Heart left ventricle (tissue), 16 donors: ENCODE measurements at regions of chr7 and their contacts with region 1.

Region 1: GRCh38 chr7:83936056-83936708 is 258.4 kb downstream of the SEMA3A start:
- DNase-seq: peak; percentile 22 to 55 (median 39)
- ATAC-seq: peak in 2 of 4 donors; percentile 57 to 70
- H3K4me3 ChIP-seq: no peak overlapping the region
- H3K27ac ChIP-seq: peak overlapping the region in 1 of 12 donors; percentile 2
- H3K4me1 ChIP-seq: peaks cover 0 to 4% (median 0%) of the 10 kb centered on the region in 12 donors
- H3K27me3 ChIP-seq: no peaks in the 10 kb centered on the region
- CTCF ChIP-seq: peak; percentile 72 to 88 (median 79)
- POLR2A ChIP-seq: no peak

Region 2: GRCh38 chr7:83755526-83755925 is 180.7 kb before region 1 on chr7:
- intact Hi-C with region 1: no loop called
- DNase-seq: no peak
- ATAC-seq: no peak
- H3K4me3 ChIP-seq: no peak overlapping the region
- H3K27ac ChIP-seq: no peak overlapping the region
- H3K4me1 ChIP-seq: no peaks in the 10 kb centered on the region
- H3K27me3 ChIP-seq: no peaks in the 10 kb centered on the region
- CTCF ChIP-seq: no peak
- POLR2A ChIP-seq: no peak

Region 3: GRCh38 chr7:85014936-85015660 is 1078.9 kb after region 1 on chr7:
- intact Hi-C with region 1: loop called in 2 of 10 experiments (anchors 5 kb)
- DNase-seq: no peak
- ATAC-seq: no peak
- H3K4me3 ChIP-seq: no peak overlapping the region
- H3K27ac ChIP-seq: no peak overlapping the region
- H3K4me1 ChIP-seq: no peaks in the 10 kb centered on the region
- H3K27me3 ChIP-seq: no peaks in the 10 kb centered on the region
- CTCF ChIP-seq: no peak
- POLR2A ChIP-seq: no peak

Region 4: DNA sequence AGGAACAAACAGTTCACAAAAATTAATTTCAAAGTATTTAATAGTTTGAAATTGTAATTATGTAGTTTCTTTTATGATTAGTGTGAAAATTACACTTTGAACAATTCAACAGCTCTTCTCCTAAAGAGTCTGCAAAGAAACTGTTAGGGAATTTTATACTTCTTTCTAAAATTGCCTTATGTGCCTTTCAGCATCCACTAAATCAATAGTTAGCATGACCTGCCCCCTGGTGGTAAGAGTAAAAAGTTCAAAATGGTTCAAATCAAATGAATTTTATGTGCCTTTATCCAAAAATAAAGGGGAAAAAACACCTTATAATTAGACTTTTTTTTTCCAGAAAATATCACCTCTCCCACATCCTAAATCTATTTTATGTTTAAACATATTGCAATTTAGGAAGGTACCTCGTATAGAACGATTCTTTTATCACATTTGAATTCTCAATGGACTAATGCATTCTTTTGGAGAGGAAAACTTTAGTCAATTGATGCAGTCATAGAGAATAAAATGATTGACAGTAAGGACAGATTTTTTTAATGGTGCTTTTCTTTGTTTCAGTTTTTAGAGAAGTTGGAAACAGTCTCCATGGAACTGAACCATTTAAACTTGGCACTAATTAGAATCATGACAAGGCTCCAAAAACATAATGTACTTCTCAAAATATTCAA is 1087.0 kb after region 1 on chr7:
- intact Hi-C with region 1: loop called in 8 of 10 experiments (anchors 1 to 5 kb)
- DNase-seq: peak in 1 of 5 donors; percentile 20
- ATAC-seq: no peak
- H3K4me3 ChIP-seq: no peak overlapping the region
- H3K27ac ChIP-seq: no peak overlapping the region
- H3K4me1 ChIP-seq: peaks cover 0 to 5% (median 0%) of the 10 kb centered on the region in 12 donors
- H3K27me3 ChIP-seq: no peaks in the 10 kb centered on the region
- CTCF ChIP-seq: peak; percentile 57 to 80 (median 70)
- POLR2A ChIP-seq: no peak

Region 5: DNA sequence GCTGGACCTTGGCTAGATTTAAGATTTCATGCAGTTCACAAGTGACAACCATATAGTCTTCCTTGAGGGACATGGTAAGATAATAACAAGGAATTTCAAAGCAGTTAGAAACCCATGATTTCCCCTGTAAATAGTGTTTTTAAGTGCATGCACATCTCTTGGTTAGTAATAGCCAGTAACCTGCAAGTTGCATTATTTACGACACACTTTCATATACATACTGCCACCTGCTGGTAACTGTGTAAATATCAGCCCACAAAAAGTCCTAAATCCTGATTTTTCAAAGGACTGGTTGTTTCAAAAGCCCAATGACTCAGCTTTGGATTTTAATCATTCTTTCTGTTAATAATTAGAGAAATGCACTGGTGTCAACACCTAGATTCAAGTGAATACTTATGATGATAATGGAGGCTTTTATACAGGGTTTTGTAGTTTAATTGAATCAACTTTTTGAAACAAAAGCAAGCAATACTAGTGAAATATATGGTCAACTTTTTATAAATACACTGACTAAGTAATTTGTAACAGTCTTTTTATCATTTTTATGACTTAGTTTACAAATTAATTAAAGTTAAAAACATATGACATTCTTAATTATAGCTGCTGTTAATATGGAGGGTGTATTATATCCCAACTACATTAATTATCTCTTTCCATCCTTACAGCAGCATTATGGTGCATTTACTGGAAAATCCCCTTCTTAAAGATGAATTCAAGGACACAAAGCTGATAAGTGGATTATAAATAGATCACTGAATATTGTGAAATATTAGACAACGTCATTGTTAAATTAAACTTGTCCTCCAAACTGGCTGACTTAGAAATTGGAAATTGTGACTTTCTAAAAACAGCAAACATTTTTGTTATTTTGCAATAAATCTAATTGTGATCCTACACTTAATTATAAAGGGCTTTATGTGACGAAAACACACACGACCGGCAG is 1618.3 kb after region 1 on chr7:
- intact Hi-C with region 1: loop called in 1 of 10 experiments (anchors 10 kb)
- DNase-seq: no peak
- ATAC-seq: peak in 1 of 4 donors; percentile 44
- H3K4me3 ChIP-seq: no peak overlapping the region
- H3K27ac ChIP-seq: no peak overlapping the region
- H3K4me1 ChIP-seq: peaks cover 0 to 3% (median 0%) of the 10 kb centered on the region in 12 donors
- H3K27me3 ChIP-seq: no peaks in the 10 kb centered on the region
- CTCF ChIP-seq: peak; percentile 46 to 75 (median 65)
- POLR2A ChIP-seq: no peak